OCI-LY7 (cell line): ENCODE measurements at regions of chr22 and their contacts with region 1.

Region 1: GRCh38 chr22:49930739-49931412 is 12.4 kb downstream of the CRELD2 start:
- DNase-seq: peak; percentile 96
- H3K4me3 ChIP-seq: peak overlapping the region; percentile 52
- H3K27ac ChIP-seq: peak overlapping the region; percentile 92
- H3K4me1 ChIP-seq: peaks cover 60% of the 10 kb centered on the region
- CTCF ChIP-seq: peak; percentile 90

Region 2: GRCh38 chr22:49960159-49961004 is 29.5 kb after region 1 on chr22 and contains the start of gene PIM3:
- CTCF ChIA-PET with region 1: no interaction called
- POLR2A ChIA-PET with region 1: no interaction called
- intact Hi-C with region 1: loop called (anchors 1 kb)
- DNase-seq: peak; percentile 99
- H3K4me3 ChIP-seq: peak within 1 kb of the TSS; percentile 98
- H3K27ac ChIP-seq: peak within 1 kb of the TSS; percentile 66
- H3K4me1 ChIP-seq: peaks cover 35% of the 10 kb centered on the region
- CTCF ChIP-seq: no peak
- total RNA-seq, gene PIM3: 74.3 and 81.7 TPM in 2 replicates

Region 3: GRCh38 chr22:49979587-49980264 is 48.9 kb after region 1 on chr22:
- CTCF ChIA-PET with region 1: no interaction called
- POLR2A ChIA-PET with region 1: no interaction called
- intact Hi-C with region 1: loop called (anchors 2 kb)
- DNase-seq: peak; percentile 62
- H3K4me3 ChIP-seq: no peak overlapping the region
- H3K27ac ChIP-seq: no peak overlapping the region
- H3K4me1 ChIP-seq: peaks cover 17% of the 10 kb centered on the region
- CTCF ChIP-seq: peak; percentile 84

Region 4: DNA sequence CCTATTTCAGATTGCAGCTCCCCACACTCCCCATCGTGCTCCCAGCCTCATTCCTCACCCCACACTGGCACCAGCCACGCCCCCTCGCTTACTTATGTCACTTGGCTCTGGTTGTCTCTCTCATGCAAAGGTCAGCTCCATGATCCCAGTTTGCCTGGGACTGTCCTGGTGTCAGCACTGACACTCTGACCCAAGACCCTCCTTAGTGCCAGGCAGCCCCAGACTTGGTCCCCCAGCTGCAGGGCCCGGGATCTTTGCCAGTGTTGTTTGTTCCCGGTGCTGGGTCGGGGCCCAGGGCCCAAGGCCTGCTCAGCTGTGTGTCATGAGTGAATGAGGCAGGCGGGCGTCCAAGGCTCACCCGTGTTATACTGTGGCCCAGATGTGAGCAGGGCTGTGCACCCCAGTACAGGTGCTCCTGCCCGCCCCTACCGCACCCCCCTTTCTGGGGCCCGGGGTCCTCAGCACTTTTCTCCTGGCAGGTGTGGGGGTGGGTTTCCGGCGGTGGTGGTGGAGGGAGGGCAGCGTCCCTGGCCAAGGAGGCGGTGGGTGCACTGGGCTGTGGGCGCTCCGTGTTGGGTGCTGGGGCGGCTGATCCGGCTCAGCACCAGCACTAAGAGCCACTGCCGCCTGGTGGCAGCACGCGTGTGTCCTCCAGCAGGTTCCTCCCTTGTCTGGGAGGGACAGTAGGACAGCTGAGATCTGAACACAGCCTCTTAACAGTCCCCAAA is 62.2 kb after region 1 on chr22:
- CTCF ChIA-PET with region 1: interaction called, 5 read pairs
- POLR2A ChIA-PET with region 1: no interaction called
- intact Hi-C with region 1: loop called (anchors 1 kb)
- DNase-seq: peak; percentile 74
- H3K4me3 ChIP-seq: no peak overlapping the region
- H3K27ac ChIP-seq: no peak overlapping the region
- H3K4me1 ChIP-seq: peaks cover 10% of the 10 kb centered on the region
- CTCF ChIP-seq: peak; percentile 80

Region 5: DNA sequence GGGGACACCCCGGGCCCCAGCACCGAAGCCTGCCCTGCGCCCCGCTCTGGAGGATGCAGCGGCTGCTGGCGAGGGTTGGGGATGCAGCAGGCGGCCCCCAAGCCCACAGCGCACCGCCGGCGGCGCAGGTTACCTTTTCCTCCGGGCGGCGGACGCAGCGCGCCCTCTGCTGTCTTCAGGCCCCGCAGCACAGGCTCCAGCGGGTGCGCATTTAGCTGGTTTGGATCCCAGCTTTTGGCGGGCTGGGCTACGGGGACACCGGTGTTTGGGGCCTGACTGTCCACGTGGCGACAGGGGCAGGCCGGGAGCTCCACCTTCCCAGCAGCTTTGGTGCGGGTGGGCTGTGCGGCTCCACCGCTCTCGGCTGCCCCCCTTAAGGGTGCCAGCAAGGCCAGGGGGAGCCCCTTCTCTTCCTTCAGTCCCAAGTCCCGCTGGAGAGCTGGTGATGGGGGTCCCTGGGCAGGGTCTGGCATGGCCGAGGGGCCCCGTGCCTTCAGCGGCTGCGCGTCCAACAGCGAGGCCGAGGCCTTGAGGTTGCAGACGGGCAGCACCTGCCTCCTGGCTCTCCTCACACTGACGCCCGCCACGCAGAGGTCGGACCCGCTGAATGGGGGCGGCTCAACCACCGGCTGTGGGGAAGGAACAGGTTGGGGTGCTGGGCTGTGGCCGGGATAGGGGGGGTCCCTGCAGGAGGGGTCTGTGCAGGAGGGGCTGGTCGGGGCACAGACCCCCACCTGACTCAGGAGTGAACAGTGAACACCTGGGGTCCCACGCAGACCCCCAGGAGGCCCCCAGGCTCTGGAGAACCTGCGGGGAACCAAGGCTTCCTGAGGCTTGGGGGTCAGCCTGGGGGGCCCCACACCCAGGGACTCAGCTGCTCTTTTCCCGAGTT is 99.7 kb after region 1 on chr22:
- CTCF ChIA-PET with region 1: interaction called, 8 read pairs
- POLR2A ChIA-PET with region 1: no interaction called
- intact Hi-C with region 1: loop called (anchors 1 kb)
- DNase-seq: peak; percentile 86
- H3K4me3 ChIP-seq: no peak overlapping the region
- H3K27ac ChIP-seq: no peak overlapping the region
- H3K4me1 ChIP-seq: peaks cover 7% of the 10 kb centered on the region
- CTCF ChIP-seq: peak; percentile 91

Region 6: DNA sequence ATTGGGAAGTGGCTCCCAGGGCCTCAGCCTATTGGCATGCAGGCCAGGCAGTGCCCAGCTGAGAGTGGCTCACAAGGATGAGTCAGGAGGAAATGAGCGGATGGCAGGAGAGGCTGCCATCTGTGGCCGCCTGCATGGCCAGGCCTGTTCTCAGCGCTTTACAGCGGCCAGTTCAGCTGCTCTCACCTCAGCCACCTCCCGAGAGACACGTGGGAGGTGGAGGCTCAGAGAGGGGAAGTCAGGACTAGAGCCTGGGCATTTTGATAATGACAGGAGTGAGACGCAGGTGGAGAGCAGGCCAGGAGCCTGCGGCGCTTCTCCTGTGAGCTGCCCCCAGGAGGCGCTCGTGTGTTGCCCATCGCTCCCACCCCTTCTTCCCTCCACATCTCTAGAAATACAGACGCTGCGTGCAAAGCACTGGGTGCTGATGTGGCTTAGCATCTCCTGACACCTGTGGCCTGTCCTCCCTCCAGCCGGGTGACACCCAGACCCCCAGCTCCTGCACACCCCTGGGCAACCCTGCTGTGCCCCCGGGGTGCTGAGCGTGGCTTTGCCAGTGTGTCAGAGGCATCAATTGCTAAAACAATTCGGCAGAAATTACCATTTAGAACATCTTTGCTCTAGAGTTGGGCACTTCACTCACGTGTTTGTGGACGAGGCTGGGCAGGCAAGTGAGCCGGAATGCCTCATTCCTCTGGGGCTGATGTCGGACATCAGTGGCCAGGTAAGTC is 218.3 kb after region 1 on chr22:
- CTCF ChIA-PET with region 1: no interaction called
- POLR2A ChIA-PET with region 1: no interaction called
- intact Hi-C with region 1: loop called (anchors 5 kb)
- DNase-seq: peak; percentile 84
- H3K4me3 ChIP-seq: no peak overlapping the region
- H3K27ac ChIP-seq: no peak overlapping the region
- H3K4me1 ChIP-seq: no peaks in the 10 kb centered on the region
- CTCF ChIP-seq: peak; percentile 90

Region 7: GRCh38 chr22:50190182-50190940 is 259.5 kb after region 1 on chr22:
- CTCF ChIA-PET with region 1: no interaction called
- POLR2A ChIA-PET with region 1: no interaction called
- intact Hi-C with region 1: loop called (anchors 5 kb)
- DNase-seq: peak; percentile 95
- H3K4me3 ChIP-seq: peak overlapping the region; percentile 68
- H3K27ac ChIP-seq: peak overlapping the region; percentile 99
- H3K4me1 ChIP-seq: peaks cover 73% of the 10 kb centered on the region
- CTCF ChIP-seq: peak; percentile 56; the same call in 1 of the 2 replicates